ENCODE measurements at regions of chr4 and their contacts with region 1.

Region 1: DNA sequence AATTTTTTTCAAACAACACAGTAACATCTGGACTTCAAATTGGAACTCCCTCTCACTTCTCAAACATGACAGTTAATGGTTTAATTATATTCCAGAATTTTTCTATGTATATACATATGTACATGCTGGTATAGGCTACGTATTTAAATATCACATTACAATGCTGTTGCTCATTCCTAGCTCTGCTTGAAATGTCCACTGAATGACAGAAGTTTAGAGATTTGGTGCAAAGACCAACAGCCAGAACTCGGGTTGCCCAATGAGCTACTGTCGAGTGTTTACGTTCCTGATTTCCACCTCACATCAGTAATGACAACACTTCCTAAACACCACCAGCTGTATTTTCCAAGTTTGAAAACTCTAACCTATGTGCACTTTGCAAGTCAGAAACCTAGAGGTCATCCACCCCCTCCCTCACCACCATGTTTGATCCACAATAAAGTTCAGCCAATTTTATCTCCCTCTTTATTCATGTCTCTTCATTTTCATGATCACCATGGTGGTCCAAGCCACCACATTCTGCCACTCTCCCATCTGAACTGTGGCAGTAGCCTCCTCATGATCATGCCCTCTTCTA is 49.3 kb upstream of the RPL34 start:
- DNase-seq: no peak

Region 2: DNA sequence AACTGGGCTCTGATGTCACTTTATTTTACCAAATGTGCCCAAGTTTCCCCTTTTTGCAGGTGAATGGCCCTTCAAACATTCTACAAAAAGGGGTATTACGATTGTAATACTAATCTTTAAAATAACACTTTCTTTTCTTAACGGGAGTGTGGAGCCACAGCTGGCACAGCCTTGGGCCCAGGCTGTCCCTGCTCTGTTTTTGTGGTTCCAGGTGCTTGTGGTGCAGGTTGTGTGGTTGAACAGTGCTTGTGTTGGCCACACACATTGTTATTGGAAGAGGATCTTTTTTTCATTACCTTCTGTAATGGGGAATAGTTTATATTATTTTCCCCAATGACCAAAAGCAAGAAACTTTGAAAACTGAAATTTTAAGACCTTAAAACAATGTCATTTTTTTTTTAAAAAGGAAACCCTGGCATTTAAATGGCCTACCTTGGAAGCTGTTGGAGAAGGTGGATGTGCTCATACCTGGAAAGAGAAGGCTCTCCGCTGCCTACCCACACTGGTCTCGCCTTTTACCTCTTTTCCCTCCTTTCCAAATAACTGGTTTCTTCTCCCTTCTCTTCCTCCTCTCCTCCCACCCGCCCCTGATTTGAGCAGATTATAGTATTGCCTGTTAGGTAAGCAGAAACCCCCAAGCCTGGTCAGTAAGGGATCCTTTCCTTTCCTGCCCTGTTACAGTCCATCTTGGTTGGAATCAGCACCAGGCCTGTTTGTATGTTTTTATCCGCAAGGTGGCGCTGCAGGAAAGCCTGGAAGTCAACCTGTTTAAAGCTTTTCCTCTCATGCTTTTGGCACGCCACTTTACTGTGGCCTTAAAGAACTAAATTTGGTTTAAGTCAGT is 552.8 kb before region 1 on chr4:
- intact Hi-C with region 1: loop called (anchors 5 kb)
- DNase-seq: peak; percentile 61 to 96 (median 86)

Region 3: GRCh38 chr4:108060164-108060563 is 510.9 kb before region 1 on chr4:
- intact Hi-C with region 1: loop called (anchors 1 kb)
- DNase-seq: no peak

Region 4: GRCh38 chr4:108303488-108304177 is 267.4 kb before region 1 on chr4:
- intact Hi-C with region 1: no loop called
- DNase-seq: no peak

Region 5: DNA sequence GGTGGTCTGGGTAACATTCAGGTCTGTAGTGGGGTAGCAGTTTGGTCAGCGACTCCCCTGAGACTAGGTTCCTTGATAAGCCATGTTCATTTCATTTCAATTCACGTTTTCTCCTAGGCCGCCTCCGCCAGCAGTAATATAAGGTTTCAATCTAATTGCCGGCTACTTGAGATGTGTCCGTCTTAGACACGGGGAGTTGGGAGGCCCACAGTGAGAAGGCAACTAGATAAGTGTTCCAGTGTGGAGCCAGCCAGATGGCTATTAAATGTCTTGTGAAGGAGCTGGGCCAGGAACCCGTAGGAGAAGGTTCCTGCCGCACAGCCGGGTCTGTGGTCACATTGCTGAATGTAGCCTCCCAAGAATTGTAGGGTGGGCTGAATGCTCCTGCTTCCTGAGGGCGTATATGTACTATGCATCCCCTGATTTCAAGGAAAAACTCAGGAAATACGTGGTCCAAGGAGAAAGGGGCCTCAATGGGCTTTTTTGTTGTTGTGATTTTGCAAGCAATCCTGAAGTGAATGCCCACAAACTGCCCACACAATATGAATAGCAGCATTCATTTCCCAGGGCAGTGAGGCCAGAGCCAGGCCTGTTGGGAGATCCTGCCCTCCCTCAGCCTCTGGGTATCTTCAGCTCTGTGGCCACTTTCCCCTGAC is 171.3 kb before region 1 on chr4:
- intact Hi-C with region 1: no loop called
- DNase-seq: no peak

Measured in posterior cingulate gyrus (tissue), 11 donors.